ENCODE measurements at regions of chr3 and their contacts with region 1.

Region 1: GRCh38 chr3:166498446-166498845 is 661.2 kb upstream of the BCHE start:
- DNase-seq: no peak
- ATAC-seq: no peak

Region 2: DNA sequence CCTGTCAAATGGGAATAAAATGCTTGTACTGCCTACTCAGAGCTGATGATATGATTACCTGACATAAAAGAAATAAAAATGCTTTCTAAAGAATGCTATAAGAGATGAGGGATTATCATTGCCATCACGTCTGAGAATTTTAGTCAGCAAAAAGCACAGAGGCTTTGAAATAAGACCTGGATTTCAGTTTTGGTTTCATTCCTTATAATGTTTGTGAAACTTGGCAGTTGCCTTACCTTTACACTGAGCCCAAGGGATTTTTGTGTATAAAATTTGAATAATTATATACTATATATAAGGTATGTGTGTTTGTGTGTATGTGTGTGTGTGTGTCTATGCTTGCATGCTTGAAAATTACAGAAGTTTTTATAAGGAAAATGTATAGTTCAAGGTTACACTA is 26.4 kb before region 1 on chr3:
- intact Hi-C with region 1: loop called (anchors 1 kb)
- DNase-seq: no peak
- ATAC-seq: no peak

Region 3: DNA sequence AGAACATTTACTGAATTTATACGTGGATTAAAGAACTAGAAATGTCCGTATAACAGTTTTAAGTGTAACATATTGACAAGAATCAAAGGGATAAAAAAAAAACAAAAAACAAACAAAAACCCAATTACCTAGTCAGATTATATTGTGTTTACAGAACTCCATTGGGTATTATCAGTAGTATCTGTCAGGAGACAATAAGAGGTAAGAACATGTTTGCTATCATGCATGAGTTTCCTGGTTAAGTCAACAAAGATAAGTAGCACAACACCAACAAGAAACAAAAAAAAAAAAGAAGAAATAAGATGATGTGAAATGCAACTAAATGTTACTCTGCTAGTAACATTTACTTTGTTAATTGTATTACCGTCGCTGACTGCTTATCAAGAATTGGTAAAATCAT is 311.1 kb after region 1 on chr3:
- intact Hi-C with region 1: no loop called
- DNase-seq: no peak
- ATAC-seq: no peak

Measured in sciatic nerve (tissue), 2 donors.